ENCODE measurements at regions of chr17 and their contacts with region 1.

Region 1: DNA sequence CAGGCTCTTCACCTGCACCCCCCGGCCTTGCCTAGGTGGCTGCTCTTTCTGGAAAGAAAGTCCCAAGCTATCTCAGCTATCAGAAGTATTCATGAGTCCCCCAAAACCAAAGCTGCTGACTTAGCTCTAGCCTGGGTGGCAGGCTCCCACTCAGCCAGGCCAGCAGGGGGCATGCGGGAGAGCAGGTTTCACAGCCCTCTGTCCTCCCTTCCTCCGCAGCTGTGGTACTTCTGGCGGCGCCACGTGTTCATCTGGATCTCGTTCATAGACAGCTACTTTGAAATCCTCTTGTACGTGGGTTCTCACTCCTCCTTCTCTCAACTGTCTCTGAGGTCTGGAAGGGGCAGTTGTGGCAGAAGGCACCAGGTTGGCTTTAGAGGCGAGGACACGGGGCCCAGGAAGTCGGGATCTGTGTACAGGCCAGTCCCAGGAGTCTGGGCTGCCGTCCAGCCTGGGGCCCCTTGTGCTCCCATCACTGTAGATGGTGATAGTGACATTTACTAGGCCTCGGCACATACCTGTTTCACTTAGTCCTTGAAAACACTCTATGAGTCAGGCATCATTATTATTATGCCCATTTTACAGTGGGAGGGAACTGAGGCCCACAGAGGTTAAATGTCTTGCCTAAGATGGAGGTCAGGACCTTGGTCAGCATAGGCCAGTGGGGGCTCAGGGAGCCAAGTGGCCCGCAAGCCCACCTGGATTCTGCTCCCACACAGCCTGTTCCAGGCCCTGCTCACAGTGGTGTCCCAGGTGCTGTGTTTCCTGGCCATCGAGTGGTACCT is 12.9 kb downstream of the TRPV2 start:
- DNase-seq: no peak
- ATAC-seq: peak; percentile 80
- H3K4me3 ChIP-seq: no peak overlapping the region
- H3K27ac ChIP-seq: no peak overlapping the region
- H3K4me1 ChIP-seq: no peaks in the 10 kb centered on the region
- H3K27me3 ChIP-seq: no peaks in the 10 kb centered on the region
- CTCF ChIP-seq: peak; percentile 85; the same call in 1 of the 2 replicates

Region 2: GRCh38 chr17:15744074-15744676 is 684.1 kb before region 1 on chr17:
- CTCF ChIA-PET with region 1: no interaction called
- POLR2A ChIA-PET with region 1: interaction called, 13 read pairs
- in situ Hi-C with region 1: no loop called
- intact Hi-C with region 1: no loop called
- DNase-seq: no peak
- ATAC-seq: no peak
- H3K4me3 ChIP-seq: no peak overlapping the region
- H3K27ac ChIP-seq: no peak overlapping the region
- H3K4me1 ChIP-seq: no peaks in the 10 kb centered on the region
- H3K27me3 ChIP-seq: no peaks in the 10 kb centered on the region
- CTCF ChIP-seq: no peak

Region 3: GRCh38 chr17:16456742-16457316 is 28.5 kb after region 1 on chr17:
- CTCF ChIA-PET with region 1: no interaction called
- POLR2A ChIA-PET with region 1: no interaction called
- in situ Hi-C with region 1: no loop called
- intact Hi-C with region 1: no loop called
- DNase-seq: no peak
- ATAC-seq: peak; percentile 47
- H3K4me3 ChIP-seq: no peak overlapping the region
- H3K27ac ChIP-seq: no peak overlapping the region
- H3K4me1 ChIP-seq: no peaks in the 10 kb centered on the region
- H3K27me3 ChIP-seq: no peaks in the 10 kb centered on the region
- CTCF ChIP-seq: no peak

Region 4: GRCh38 chr17:16584273-16584995 is 156.1 kb after region 1 on chr17:
- CTCF ChIA-PET with region 1: no interaction called
- POLR2A ChIA-PET with region 1: no interaction called
- in situ Hi-C with region 1: no loop called
- intact Hi-C with region 1: no loop called
- DNase-seq: peak; percentile 55
- ATAC-seq: peak; percentile 97
- H3K4me3 ChIP-seq: peak overlapping the region; percentile 59 to 84
- H3K27ac ChIP-seq: peak overlapping the region; percentile 68
- H3K4me1 ChIP-seq: peaks cover 3% of the 10 kb centered on the region; the same call in 1 of the 2 replicates
- H3K27me3 ChIP-seq: no peaks in the 10 kb centered on the region
- CTCF ChIP-seq: peak; percentile 98